ENCODE measurements at regions of chr1 and their contacts with region 1.

Region 1: DNA sequence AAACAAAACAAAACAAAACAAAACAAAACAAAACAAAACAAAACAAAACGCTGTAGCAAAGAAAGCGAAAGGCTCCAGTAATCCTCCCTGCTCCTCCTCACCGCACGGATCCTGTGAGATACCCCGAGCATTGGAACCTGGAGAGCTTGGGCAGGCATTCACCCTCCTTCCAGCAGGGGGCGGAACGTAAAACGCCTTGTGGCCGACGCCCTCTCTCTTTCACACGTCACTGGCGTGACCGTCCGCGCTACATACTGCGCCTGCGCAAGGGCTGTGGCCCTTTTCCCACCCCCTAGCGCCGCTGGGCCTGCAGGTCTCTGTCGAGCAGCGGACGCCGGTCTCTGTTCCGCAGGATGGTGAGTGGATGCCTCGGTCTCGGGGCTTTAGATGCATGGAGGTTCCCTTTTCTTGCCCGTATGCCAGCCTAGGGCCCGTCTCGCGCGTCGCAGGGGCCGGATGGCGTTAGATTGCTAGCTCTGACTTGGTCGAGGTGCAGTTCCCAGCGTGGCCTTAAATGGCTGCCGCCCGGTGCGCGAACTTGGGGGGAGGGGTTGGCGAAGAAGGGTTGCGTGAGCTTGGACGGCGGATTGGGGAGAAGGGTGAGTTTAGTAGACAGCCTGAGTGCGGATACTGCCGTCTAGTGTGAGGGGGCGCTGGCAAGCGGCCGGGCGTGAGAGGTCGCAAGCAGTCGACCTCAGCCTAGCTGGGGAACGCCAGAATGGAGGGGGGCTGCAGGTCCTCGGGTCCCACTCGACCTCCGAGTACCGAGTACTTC is at the start of gene RPL5:
- DNase-seq: peak; percentile 98
- H3K4me3 Mint-ChIP-seq: peak within 1 kb of the TSS; percentile 97
- H3K27ac Mint-ChIP-seq: peak within 1 kb of the TSS; percentile 100
- H3K4me1 Mint-ChIP-seq: peaks cover 28% of the 10 kb centered on the region
- H3K27me3 Mint-ChIP-seq: no peaks in the 10 kb centered on the region
- CTCF ChIP-seq: peak; percentile 87
- total RNA-seq, gene RPL5: 672 and 835 TPM in 2 replicates

Region 2: GRCh38 chr1:92749024-92749634 is 82.8 kb before region 1 on chr1:
- CTCF ChIA-PET with region 1: interaction called, 22 read pairs
- intact Hi-C with region 1: loop called (anchors 5 kb)
- DNase-seq: peak; percentile 50
- H3K4me3 Mint-ChIP-seq: no peak overlapping the region
- H3K27ac Mint-ChIP-seq: no peak overlapping the region
- H3K4me1 Mint-ChIP-seq: peaks cover 25% of the 10 kb centered on the region
- H3K27me3 Mint-ChIP-seq: no peaks in the 10 kb centered on the region
- CTCF ChIP-seq: peak; percentile 62